Left ventricle myocardium inferior (tissue), 1 donor: ENCODE measurements at regions of chr6 and their contacts with region 1.

Region 1: GRCh38 chr6:5078121-5078669 is 6.9 kb upstream of the PPP1R3G start:
- DNase-seq: no peak
- H3K4me3 ChIP-seq: no peak overlapping the region
- H3K27ac ChIP-seq: no peak overlapping the region
- H3K4me1 ChIP-seq: peaks cover 3% of the 10 kb centered on the region
- H3K27me3 ChIP-seq: no peaks in the 10 kb centered on the region
- CTCF ChIP-seq: peak; percentile 54

Region 2: DNA sequence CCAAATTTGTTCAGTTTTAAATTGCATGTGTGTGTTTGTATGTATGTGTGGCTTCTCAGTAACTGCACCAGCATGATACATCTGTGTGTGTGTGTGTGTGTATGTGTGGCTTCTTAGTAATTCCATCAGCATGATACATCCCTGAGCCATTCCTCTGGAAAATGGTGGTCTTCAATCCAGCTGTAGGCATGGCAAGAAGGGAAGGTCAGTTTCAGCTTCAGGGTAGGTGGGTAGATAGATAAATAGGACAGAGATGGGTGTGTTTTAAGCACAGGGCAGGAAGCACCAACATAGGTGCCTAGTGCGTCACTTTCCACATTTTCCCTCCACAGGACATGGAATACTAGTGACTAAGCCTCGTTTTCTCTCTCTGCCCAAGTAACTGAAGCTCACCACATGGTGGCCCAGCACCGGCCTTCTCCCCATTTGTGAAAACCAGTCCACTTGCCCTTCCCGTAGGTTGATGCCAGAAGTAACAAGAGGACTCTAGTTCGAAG is 157.2 kb before region 1 on chr6:
- intact Hi-C with region 1: no loop called
- DNase-seq: no peak
- H3K4me3 ChIP-seq: no peak overlapping the region
- H3K27ac ChIP-seq: no peak overlapping the region
- H3K4me1 ChIP-seq: peaks cover 11% of the 10 kb centered on the region
- H3K27me3 ChIP-seq: no peaks in the 10 kb centered on the region
- CTCF ChIP-seq: no peak

Region 3: DNA sequence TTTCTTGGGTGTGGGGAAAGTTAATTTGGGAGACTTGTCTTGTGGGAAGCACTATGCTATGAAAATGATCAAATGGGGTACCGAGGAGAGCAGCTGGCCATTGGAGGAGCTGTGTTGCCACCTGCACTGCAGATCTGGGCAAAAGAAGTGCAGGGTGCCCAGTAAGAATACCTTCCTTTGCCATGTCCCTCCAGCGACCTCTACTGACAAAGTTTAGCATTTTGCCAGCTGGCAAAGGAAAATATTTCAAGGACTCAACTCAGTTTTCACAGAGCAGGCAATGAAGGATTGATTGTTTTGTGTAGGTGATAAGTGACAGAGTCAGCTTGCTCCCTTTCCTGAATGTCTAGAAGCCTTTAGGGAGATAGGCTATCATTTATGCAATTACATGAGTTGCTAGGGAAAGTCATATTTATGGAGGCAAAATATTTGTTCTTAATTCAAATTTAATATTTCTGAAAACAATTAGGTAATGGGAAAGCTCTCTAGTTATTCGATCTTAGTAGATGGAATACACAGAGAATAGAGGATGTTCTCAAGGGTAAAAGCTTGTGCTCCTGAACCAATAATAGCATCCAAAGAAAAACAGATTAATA is 301.6 kb after region 1 on chr6:
- intact Hi-C with region 1: loop called (anchors 10 kb)
- DNase-seq: no peak
- H3K4me3 ChIP-seq: no peak overlapping the region
- H3K27ac ChIP-seq: no peak overlapping the region
- H3K4me1 ChIP-seq: peaks cover 9% of the 10 kb centered on the region
- H3K27me3 ChIP-seq: no peaks in the 10 kb centered on the region
- CTCF ChIP-seq: peak; percentile 44

Region 4: GRCh38 chr6:5398530-5398929 is 320.3 kb after region 1 on chr6:
- intact Hi-C with region 1: no loop called
- DNase-seq: no peak
- H3K4me3 ChIP-seq: no peak overlapping the region
- H3K27ac ChIP-seq: no peak overlapping the region
- H3K4me1 ChIP-seq: peaks cover 10% of the 10 kb centered on the region
- H3K27me3 ChIP-seq: no peaks in the 10 kb centered on the region
- CTCF ChIP-seq: peak; percentile 61